PC-3 (cell line): ENCODE measurements at regions of chr4 and their contacts with region 1.

Region 1: GRCh38 chr4:54233277-54233696 is 4.2 kb downstream of the PDGFRA start:
- DNase-seq: peak; percentile 93
- ATAC-seq: peak; percentile 84
- H3K4me3 ChIP-seq: peak overlapping the region; percentile 67
- H3K27ac ChIP-seq: no peak overlapping the region
- H3K4me1 ChIP-seq: peaks cover 29% of the 10 kb centered on the region
- H3K27me3 ChIP-seq: peaks cover 38% of the 10 kb centered on the region
- CTCF ChIP-seq: peak; percentile 74

Region 2: GRCh38 chr4:52376132-52376704 is 1857.1 kb before region 1 on chr4:
- CTCF ChIA-PET with region 1: interaction called, 13 read pairs
- POLR2A ChIA-PET with region 1: no interaction called
- intact Hi-C with region 1: no loop called
- DNase-seq: peak; percentile 77
- ATAC-seq: no peak; the same call in 1 of the 2 replicates
- H3K4me3 ChIP-seq: no peak overlapping the region
- H3K27ac ChIP-seq: no peak overlapping the region
- H3K4me1 ChIP-seq: peaks cover 11% of the 10 kb centered on the region
- H3K27me3 ChIP-seq: peaks cover 24% of the 10 kb centered on the region
- CTCF ChIP-seq: peak; percentile 88

Region 3: GRCh38 chr4:52721968-52722815 is 1511.1 kb before region 1 on chr4:
- CTCF ChIA-PET with region 1: interaction called, 3 read pairs
- POLR2A ChIA-PET with region 1: no interaction called
- intact Hi-C with region 1: loop called (anchors 5 kb)
- DNase-seq: peak; percentile 98
- ATAC-seq: peak; percentile 98
- H3K4me3 ChIP-seq: peak overlapping the region; percentile 80
- H3K27ac ChIP-seq: 0 out of 2 replicates have a peak overlapping the region, but pooled peaks have one; percentile 10
- H3K4me1 ChIP-seq: peaks cover 11% of the 10 kb centered on the region
- H3K27me3 ChIP-seq: no peaks in the 10 kb centered on the region
- CTCF ChIP-seq: no peak

Region 4: DNA sequence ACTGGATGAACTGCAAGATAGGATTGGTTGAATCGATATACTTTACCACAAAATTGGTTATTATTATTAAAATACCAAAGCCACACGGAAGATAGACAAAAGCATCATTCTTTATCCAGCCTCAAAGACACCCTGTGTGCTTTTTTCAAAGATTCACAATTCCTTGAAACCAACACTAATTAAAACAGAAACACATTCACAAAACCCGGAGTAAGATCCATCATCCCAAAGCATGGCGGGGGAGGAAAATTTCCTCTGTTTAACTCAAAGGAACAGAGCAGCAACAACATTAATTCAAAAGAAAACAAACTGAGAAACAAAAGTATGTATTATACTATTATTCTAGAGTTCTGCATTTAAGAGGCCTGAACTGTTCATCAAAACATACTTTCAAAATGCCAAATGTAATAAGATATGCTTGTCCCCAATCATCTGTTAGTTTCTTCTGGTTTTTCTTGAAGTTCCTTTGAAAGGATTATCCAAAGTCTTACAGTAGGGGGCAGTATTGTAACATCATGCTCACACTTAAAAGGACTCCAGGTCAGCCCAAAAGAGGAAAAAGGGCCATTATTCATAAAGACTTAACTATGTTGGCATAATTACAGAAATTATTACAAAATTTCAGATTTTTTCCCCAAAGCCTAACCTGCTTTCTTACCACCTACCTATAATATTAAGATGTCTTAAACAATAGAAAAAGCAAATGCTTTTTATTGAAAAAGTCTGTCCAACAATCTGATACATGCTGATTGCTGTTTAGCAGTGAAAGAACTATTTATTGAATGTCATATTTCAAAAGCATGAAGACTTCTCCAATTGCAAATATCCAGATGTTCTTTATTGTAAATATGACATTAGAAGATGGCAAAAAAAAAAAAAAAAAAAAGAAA is 1036.2 kb before region 1 on chr4:
- CTCF ChIA-PET with region 1: interaction called, 5 read pairs
- POLR2A ChIA-PET with region 1: no interaction called
- intact Hi-C with region 1: loop called (anchors 1 kb)
- DNase-seq: peak; percentile 89
- ATAC-seq: peak; percentile 71
- H3K4me3 ChIP-seq: no peak overlapping the region
- H3K27ac ChIP-seq: no peak overlapping the region
- H3K4me1 ChIP-seq: no peaks in the 10 kb centered on the region
- H3K27me3 ChIP-seq: no peaks in the 10 kb centered on the region
- CTCF ChIP-seq: peak; percentile 95

Region 5: DNA sequence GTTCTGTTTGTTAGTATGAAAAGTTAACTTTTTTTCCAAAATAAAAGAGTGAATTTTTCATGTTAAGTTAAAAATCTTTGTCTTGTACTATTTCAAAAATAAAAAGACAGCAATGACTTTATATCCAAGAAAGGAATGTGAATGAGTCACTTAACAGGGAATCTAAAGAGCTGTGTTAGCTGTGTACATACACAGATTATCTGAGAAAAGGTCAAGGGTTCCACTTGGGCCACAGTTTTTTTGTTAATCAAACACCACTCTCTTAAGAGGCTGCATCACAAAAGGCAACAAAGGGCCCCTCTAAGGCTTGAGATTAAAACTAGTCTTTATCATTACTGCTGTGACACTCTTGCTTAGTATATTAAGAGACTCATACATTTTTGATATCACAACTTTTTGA is 773.7 kb before region 1 on chr4:
- CTCF ChIA-PET with region 1: no interaction called
- POLR2A ChIA-PET with region 1: no interaction called
- intact Hi-C with region 1: loop called (anchors 10 kb)
- DNase-seq: peak; percentile 64
- ATAC-seq: peak; percentile 68
- H3K4me3 ChIP-seq: no peak overlapping the region
- H3K27ac ChIP-seq: peak overlapping the region; percentile 12
- H3K4me1 ChIP-seq: peaks cover 57% of the 10 kb centered on the region
- H3K27me3 ChIP-seq: no peaks in the 10 kb centered on the region
- CTCF ChIP-seq: no peak

Region 6: GRCh38 chr4:53786632-53787031 is 446.7 kb before region 1 on chr4:
- CTCF ChIA-PET with region 1: interaction called, 3 read pairs
- POLR2A ChIA-PET with region 1: no interaction called
- intact Hi-C with region 1: loop called (anchors 2 kb)
- DNase-seq: no peak
- ATAC-seq: no peak
- H3K4me3 ChIP-seq: no peak overlapping the region
- H3K27ac ChIP-seq: no peak overlapping the region
- H3K4me1 ChIP-seq: peaks cover 21% of the 10 kb centered on the region
- H3K27me3 ChIP-seq: no peaks in the 10 kb centered on the region
- CTCF ChIP-seq: no peak

Region 7: DNA sequence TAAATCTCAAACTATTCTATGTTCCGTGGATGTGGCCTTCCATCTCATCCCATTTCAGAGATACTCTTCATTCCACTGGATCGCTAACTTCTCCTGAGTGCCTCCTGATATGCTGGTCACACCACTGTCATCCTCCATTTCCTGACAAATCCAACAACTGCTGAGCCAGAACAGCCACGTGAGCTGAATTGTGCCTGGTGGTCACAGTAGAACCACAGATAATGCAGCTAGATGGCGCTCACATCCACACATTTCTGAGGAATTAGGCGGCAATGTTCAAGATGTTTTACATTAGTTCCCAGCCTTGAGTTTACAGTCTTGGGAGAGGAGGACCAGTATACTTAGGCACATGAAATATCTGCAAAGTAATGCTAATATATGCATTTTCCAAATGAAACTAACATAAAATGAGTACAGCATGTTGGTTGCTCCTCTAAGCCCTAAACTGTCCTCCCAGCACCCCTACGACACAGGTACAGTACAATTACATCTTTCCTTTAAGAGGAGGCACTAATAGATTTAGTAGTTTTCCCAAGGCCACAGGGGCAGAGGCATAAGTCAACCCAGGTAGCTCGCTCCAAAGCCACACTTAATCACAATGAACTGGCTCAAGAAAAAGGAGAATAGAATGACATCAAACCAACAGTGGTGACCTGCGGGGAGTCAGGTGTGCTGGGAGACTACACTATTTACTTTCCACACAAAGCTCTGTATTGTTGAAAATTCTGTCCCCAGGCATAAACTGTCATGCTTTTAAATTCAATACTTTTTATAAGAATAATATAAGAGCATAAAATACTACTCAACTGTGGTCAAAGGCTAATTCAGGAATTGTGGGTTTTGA is 303.1 kb before region 1 on chr4:
- CTCF ChIA-PET with region 1: interaction called, 18 read pairs
- POLR2A ChIA-PET with region 1: no interaction called
- intact Hi-C with region 1: no loop called
- DNase-seq: peak; percentile 94
- ATAC-seq: peak; percentile 86
- H3K4me3 ChIP-seq: no peak overlapping the region
- H3K27ac ChIP-seq: peak overlapping the region; percentile 90
- H3K4me1 ChIP-seq: peaks cover 36% of the 10 kb centered on the region
- H3K27me3 ChIP-seq: no peaks in the 10 kb centered on the region
- CTCF ChIP-seq: peak; percentile 97